CD8-positive, alpha-beta T cell (primary cell): ENCODE measurements at regions of chrX and their contacts with region 1.

Region 1: GRCh38 chrX:129637217-129638109 is 17.3 kb downstream of the APLN start:
- DNase-seq: peak; percentile 54 to 87 (median 75)
- ATAC-seq: peak; percentile 74
- H3K4me3 ChIP-seq: no peak overlapping the region
- H3K4me3 Mint-ChIP-seq: no peak overlapping the region
- H3K27ac ChIP-seq: no peak overlapping the region
- H3K27ac Mint-ChIP-seq: no peak overlapping the region
- H3K4me1 ChIP-seq: no peaks in the 10 kb centered on the region
- H3K4me1 Mint-ChIP-seq: no peaks in the 10 kb centered on the region
- H3K27me3 ChIP-seq: no peaks in the 10 kb centered on the region
- H3K27me3 Mint-ChIP-seq: no peaks in the 10 kb centered on the region
- CTCF ChIP-seq: peak; percentile 67

Region 2: GRCh38 chrX:129433461-129433860 is 204.0 kb before region 1 on chrX:
- CTCF ChIA-PET with region 1: no interaction called
- POLR2A ChIA-PET with region 1: no interaction called
- intact Hi-C with region 1: no loop called
- DNase-seq: no peak
- ATAC-seq: no peak
- H3K4me3 ChIP-seq: no peak overlapping the region
- H3K4me3 Mint-ChIP-seq: no peak overlapping the region
- H3K27ac ChIP-seq: no peak overlapping the region
- H3K27ac Mint-ChIP-seq: no peak overlapping the region
- H3K4me1 ChIP-seq: no peaks in the 10 kb centered on the region
- H3K4me1 Mint-ChIP-seq: no peaks in the 10 kb centered on the region
- H3K27me3 ChIP-seq: no peaks in the 10 kb centered on the region
- H3K27me3 Mint-ChIP-seq: no peaks in the 10 kb centered on the region
- CTCF ChIP-seq: no peak

Region 3: GRCh38 chrX:129472116-129472515 is 165.3 kb before region 1 on chrX:
- CTCF ChIA-PET with region 1: no interaction called
- POLR2A ChIA-PET with region 1: no interaction called
- intact Hi-C with region 1: no loop called
- DNase-seq: no peak
- ATAC-seq: no peak
- H3K4me3 ChIP-seq: no peak overlapping the region
- H3K4me3 Mint-ChIP-seq: no peak overlapping the region
- H3K27ac ChIP-seq: no peak overlapping the region
- H3K27ac Mint-ChIP-seq: no peak overlapping the region
- H3K4me1 ChIP-seq: no peaks in the 10 kb centered on the region
- H3K4me1 Mint-ChIP-seq: no peaks in the 10 kb centered on the region
- H3K27me3 ChIP-seq: no peaks in the 10 kb centered on the region
- H3K27me3 Mint-ChIP-seq: no peaks in the 10 kb centered on the region
- CTCF ChIP-seq: no peak

Region 4: GRCh38 chrX:129606918-129607317 is 30.5 kb before region 1 on chrX:
- CTCF ChIA-PET with region 1: interaction called, 3 read pairs
- POLR2A ChIA-PET with region 1: no interaction called
- intact Hi-C with region 1: loop called in 1 of 2 experiments (anchors 1 kb)
- DNase-seq: peak; percentile 9 to 72 (median 60)
- ATAC-seq: peak; percentile 63
- H3K4me3 ChIP-seq: no peak overlapping the region
- H3K4me3 Mint-ChIP-seq: no peak overlapping the region
- H3K27ac ChIP-seq: no peak overlapping the region
- H3K27ac Mint-ChIP-seq: no peak overlapping the region
- H3K4me1 ChIP-seq: peaks cover 15% of the 10 kb centered on the region
- H3K4me1 Mint-ChIP-seq: peaks cover 19% of the 10 kb centered on the region
- H3K27me3 ChIP-seq: no peaks in the 10 kb centered on the region
- H3K27me3 Mint-ChIP-seq: no peaks in the 10 kb centered on the region
- CTCF ChIP-seq: peak; percentile 54

Region 5: DNA sequence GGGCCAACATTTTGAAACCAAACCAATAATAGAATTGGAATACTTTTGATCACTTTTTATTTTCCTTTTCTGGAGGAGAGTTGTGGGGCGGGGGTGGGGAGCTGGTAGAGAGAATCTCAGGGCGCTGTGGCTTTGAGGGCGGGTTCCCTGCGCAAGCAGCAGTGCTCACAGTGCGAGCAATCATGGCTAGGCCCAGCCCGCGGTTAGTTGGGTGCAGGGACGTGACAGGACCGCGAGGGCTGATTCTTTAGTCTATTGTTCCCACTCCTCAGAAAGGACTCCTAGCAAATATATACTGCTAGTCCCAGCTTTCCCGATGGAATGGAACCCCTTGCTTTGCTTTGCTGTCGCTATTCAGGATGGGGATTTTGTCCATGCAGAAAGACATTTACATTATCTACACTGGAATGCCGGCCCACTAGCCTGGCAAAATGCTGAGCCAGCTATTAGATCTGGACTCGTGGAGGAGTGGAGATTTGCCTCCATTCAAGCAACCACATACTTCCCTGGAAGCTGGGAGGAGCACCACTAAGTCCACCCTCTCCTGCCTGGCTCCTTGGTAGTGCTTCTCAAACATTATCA is 41.2 kb after region 1 on chrX:
- CTCF ChIA-PET with region 1: interaction called, 4 read pairs
- POLR2A ChIA-PET with region 1: no interaction called
- intact Hi-C with region 1: loop called in 1 of 2 experiments (anchors 1 kb)
- DNase-seq: peak in 8 of 9 experiments; percentile 2 to 67 (median 50)
- ATAC-seq: peak; percentile 72
- H3K4me3 ChIP-seq: peak overlapping the region; percentile 49 to 58
- H3K4me3 Mint-ChIP-seq: peak overlapping the region; percentile 73
- H3K27ac ChIP-seq: peak overlapping the region in 1 of 2 experiments; percentile 35
- H3K27ac Mint-ChIP-seq: peak overlapping the region; percentile 82
- H3K4me1 ChIP-seq: peaks cover 18% of the 10 kb centered on the region
- H3K4me1 Mint-ChIP-seq: peaks cover 18% of the 10 kb centered on the region
- H3K27me3 ChIP-seq: no peaks in the 10 kb centered on the region
- H3K27me3 Mint-ChIP-seq: no peaks in the 10 kb centered on the region
- CTCF ChIP-seq: no peak

Region 6: GRCh38 chrX:129726307-129727111 is 89.0 kb after region 1 on chrX:
- CTCF ChIA-PET with region 1: interaction called, 10 read pairs
- POLR2A ChIA-PET with region 1: no interaction called
- intact Hi-C with region 1: loop called (anchors 1 to 2 kb)
- DNase-seq: peak in 5 of 9 experiments; percentile 8 to 52 (median 42)
- ATAC-seq: no peak
- H3K4me3 ChIP-seq: no peak overlapping the region
- H3K4me3 Mint-ChIP-seq: no peak overlapping the region
- H3K27ac ChIP-seq: no peak overlapping the region
- H3K27ac Mint-ChIP-seq: no peak overlapping the region
- H3K4me1 ChIP-seq: no peaks in the 10 kb centered on the region
- H3K4me1 Mint-ChIP-seq: peaks cover 43% of the 10 kb centered on the region
- H3K27me3 ChIP-seq: no peaks in the 10 kb centered on the region
- H3K27me3 Mint-ChIP-seq: no peaks in the 10 kb centered on the region
- CTCF ChIP-seq: peak; percentile 39

Region 7: DNA sequence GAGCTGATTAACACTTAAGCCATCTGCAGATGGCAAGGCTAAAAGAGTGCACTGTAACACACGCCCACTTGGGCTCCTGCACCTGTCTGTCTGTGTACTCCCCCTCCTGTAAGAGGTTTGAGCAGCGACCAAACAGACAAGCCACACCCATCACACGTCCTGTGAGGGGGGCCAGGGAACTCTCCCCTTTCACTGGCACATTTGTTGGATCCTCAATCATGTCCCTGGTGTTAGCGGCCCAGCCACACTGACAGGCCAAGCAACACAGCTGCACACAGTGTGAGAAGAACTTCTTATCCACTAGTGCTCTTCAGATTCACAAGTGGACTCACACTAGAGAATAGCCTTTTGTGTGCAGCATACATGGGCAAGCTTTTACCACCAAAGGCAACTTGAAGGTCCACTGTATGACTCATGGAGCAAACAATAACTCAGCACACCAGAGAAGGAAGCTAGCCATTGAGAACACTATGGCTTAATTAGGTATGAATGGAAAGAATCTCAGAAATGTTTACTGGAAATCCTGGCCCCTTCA is 239.4 kb after region 1 on chrX:
- CTCF ChIA-PET with region 1: no interaction called
- POLR2A ChIA-PET with region 1: no interaction called
- intact Hi-C with region 1: loop called in 1 of 2 experiments (anchors 5 kb)
- DNase-seq: peak in 1 of 9 experiments; percentile 1
- ATAC-seq: no peak
- H3K4me3 ChIP-seq: no peak overlapping the region
- H3K4me3 Mint-ChIP-seq: no peak overlapping the region
- H3K27ac ChIP-seq: no peak overlapping the region
- H3K27ac Mint-ChIP-seq: no peak overlapping the region
- H3K4me1 ChIP-seq: no peaks in the 10 kb centered on the region
- H3K4me1 Mint-ChIP-seq: no peaks in the 10 kb centered on the region
- H3K27me3 ChIP-seq: no peaks in the 10 kb centered on the region
- H3K27me3 Mint-ChIP-seq: no peaks in the 10 kb centered on the region
- CTCF ChIP-seq: no peak

Region 8: DNA sequence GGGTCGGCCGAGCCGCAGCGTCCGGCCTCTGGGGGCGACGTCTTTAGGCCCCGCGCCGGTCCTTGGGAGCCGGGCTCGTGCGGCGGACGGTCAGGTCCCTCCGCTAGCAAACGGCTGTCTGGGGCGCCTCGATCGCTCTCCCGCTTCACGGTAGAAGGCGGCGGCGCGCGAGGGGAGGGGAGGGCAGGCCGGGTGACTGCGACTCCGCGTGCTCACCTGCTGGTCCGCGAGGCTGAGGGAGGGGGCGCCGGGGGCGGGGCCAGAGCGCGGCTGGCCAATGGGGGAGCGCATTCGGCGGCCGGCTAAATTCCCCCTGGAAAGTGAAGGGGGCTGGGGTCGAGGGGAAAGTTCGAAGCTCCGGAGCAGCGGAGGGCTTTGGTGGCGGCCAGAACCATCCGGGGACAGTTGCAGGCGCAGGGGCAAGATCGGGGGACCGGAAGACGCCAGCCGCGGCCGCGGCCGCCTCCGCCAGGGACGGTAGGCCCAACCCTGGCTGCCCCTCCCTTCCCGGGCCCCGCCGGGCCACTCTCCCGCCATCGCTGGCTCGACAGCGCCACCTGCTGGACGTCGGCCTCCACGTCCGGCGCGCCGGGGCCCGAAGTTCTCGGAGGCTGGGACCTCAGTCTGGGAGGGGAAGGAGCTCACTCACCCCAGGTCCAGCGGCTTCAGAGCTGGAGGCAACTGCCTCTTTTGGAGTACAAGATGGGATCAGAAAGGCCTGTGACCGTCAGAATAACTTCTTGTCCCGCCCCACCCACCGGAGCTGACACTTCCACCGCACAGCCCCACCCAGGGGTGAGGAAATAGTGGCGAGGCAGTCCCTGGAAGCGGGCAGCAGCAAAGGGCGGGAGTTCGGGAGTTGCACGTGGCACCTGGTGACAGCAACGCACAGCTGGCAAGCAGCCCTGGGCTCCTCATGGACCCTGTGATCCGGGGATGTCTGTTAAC is 422.9 kb after region 1 on chrX:
- CTCF ChIA-PET with region 1: interaction called, 13 read pairs
- POLR2A ChIA-PET with region 1: no interaction called
- intact Hi-C with region 1: loop called in 1 of 2 experiments (anchors 10 kb)
- DNase-seq: peak; percentile 54 to 91 (median 80)
- ATAC-seq: peak; percentile 87
- H3K4me3 ChIP-seq: peak overlapping the region; percentile 48 to 53
- H3K4me3 Mint-ChIP-seq: peak overlapping the region; percentile 66
- H3K27ac ChIP-seq: no peak overlapping the region
- H3K27ac Mint-ChIP-seq: no peak overlapping the region
- H3K4me1 ChIP-seq: peaks cover 7% of the 10 kb centered on the region
- H3K4me1 Mint-ChIP-seq: peaks cover 12% of the 10 kb centered on the region
- H3K27me3 ChIP-seq: no peaks in the 10 kb centered on the region
- H3K27me3 Mint-ChIP-seq: no peaks in the 10 kb centered on the region
- CTCF ChIP-seq: peak; percentile 67

Region 9: GRCh38 chrX:130321550-130321949 is 684.1 kb after region 1 on chrX:
- CTCF ChIA-PET with region 1: no interaction called
- POLR2A ChIA-PET with region 1: no interaction called
- intact Hi-C with region 1: no loop called
- DNase-seq: no peak
- ATAC-seq: no peak
- H3K4me3 ChIP-seq: no peak overlapping the region
- H3K4me3 Mint-ChIP-seq: no peak overlapping the region
- H3K27ac ChIP-seq: no peak overlapping the region
- H3K27ac Mint-ChIP-seq: no peak overlapping the region
- H3K4me1 ChIP-seq: no peaks in the 10 kb centered on the region
- H3K4me1 Mint-ChIP-seq: no peaks in the 10 kb centered on the region
- H3K27me3 ChIP-seq: no peaks in the 10 kb centered on the region
- H3K27me3 Mint-ChIP-seq: peaks cover 13% of the 10 kb centered on the region
- CTCF ChIP-seq: no peak